PC-9 (cell line): ENCODE measurements at regions of chr19 and their contacts with region 1.

Region 1: DNA sequence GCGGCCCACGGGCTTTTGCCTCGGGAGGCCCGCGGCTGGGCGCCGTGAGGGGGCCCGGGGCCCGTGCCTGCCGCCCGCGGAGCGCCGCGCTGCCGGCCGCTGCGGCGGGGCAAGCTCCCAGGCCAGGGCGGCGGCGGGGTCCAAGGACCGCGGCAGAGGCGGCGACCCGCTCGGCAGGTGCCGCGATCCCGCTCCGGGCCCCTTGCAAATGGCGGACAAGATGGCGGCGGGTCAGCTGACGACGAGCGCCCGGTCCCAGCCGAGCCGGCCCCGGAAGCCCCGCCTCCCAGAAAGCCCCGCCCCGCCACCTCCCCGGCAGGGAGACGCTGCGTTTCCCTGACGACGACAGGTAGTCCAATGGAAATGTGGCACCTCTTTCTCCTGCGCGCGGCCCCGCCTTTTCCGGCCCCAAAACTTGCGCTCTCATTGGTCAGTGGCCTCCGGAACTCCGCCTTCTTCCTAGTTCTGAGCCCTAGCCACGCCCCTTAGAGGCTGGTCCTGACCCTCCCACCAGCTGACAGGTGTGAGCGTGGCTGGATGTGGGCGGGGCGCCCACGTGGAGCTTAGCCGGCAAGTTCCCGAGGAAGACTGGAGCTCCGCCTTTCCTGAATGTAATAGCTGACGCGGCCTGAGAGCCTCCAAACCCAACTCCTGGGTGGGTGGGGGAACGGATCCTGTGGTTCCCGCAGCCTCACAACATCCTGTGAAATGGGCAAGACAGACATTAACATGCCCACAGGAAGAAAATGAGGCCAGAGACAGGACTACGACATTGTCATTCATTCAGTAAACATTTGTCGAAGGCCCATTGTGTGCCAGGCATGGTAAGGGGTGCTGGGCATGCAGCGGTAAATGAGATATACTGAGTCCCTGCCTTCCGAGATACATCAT is at the start of gene AP3D1:
- DNase-seq: peak; percentile 93 to 98
- H3K4me3 ChIP-seq: peak within 1 kb of the TSS; percentile 83
- H3K27ac ChIP-seq: peak within 1 kb of the TSS; percentile 68
- H3K4me1 ChIP-seq: peaks cover 43% of the 10 kb centered on the region
- H3K27me3 ChIP-seq: no peaks in the 10 kb centered on the region
- CTCF ChIP-seq: no peak
- total RNA-seq, gene AP3D1: 75.5 and 87.2 TPM in 2 replicates

Region 2: GRCh38 chr19:1992759-1993260 is 158.8 kb before region 1 on chr19:
- CTCF ChIA-PET with region 1: no interaction called
- POLR2A ChIA-PET with region 1: no interaction called
- intact Hi-C with region 1: no loop called
- DNase-seq: no peak
- H3K4me3 ChIP-seq: no peak overlapping the region
- H3K27ac ChIP-seq: no peak overlapping the region
- H3K4me1 ChIP-seq: no peaks in the 10 kb centered on the region
- H3K27me3 ChIP-seq: no peaks in the 10 kb centered on the region
- CTCF ChIP-seq: no peak

Region 3: DNA sequence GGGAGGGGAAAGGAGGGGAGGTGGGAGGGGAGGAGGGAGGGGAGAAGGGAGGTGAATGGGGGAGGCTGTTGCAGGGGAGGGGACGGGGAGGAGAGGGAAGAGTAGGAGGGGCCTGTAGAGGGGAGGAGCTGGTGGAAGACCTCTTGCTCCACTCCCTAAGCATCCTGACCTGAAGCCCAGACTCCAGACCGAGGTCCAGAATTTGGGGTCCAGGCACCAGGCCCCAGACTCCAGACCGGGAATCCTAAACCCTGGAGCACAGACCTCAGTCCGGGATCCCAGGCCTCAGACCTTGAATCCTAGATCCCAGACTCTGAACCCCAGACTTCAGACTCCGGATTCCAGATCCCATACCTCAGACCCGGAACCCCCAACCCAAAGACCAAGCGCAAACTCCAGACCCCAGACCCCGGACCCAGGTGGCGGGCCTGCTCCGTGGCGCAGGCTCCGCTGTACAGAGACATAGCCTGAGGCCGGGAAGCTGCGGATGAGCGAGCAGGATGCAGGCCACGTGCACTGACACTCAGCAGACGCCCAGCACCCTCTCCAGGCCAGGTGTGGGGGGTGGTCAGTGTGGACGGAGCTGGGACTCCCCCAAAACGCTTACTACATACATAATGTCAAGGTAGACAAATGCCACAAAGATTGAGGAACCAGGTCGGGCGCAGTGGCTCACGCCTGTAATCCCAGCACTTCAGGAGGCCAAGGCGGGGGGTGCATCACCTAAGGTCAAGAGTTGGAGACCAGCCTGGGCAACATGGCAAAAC is 135.4 kb before region 1 on chr19:
- CTCF ChIA-PET with region 1: no interaction called
- POLR2A ChIA-PET with region 1: interaction called, 4 read pairs
- intact Hi-C with region 1: loop called (anchors 10 kb)
- DNase-seq: peak; percentile 44 to 57
- H3K4me3 ChIP-seq: no peak overlapping the region
- H3K27ac ChIP-seq: no peak overlapping the region
- H3K4me1 ChIP-seq: no peaks in the 10 kb centered on the region; the same call in 1 of the 2 replicates
- H3K27me3 ChIP-seq: no peaks in the 10 kb centered on the region
- CTCF ChIP-seq: no peak

Region 4: DNA sequence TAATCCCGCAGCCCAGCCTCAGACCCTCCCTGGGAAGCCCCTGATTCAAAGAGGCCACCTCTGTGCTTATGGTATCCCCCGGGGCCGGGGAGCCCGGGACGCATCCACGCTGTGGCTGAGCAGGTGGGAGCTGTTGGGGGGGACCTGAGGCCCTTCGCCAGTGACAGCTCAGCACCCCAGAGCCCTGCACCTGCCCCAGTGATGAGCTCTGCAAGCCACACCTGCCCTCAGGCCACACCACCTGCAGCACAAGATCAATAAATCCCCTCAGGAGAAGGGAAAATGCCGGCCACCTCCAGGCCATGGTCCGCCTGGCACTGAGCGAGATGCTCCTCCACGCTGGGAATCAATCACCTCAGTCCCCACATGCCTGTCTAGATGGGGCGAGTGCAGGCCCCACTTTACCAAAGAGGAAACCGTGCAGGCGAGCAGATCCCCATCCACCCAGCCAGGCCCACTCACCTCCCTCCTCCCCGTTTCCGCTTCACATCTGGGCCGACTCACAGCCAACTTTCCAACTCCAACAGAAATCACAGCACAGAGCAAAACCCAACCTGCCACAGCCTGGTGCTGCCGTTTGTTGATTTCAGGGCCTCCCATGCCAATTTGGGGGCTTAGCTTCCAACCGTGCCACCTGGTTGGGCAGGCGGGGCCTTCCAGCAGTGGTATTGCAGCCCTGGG is 68.3 kb before region 1 on chr19:
- CTCF ChIA-PET with region 1: no interaction called
- POLR2A ChIA-PET with region 1: no interaction called
- intact Hi-C with region 1: no loop called
- DNase-seq: no peak
- H3K4me3 ChIP-seq: no peak overlapping the region
- H3K27ac ChIP-seq: no peak overlapping the region
- H3K4me1 ChIP-seq: peaks cover 11% of the 10 kb centered on the region
- H3K27me3 ChIP-seq: no peaks in the 10 kb centered on the region
- CTCF ChIP-seq: no peak

Region 5: GRCh38 chr19:2236314-2237050 is 84.9 kb after region 1 on chr19 and contains the starts of genes PLEKHJ1 and SF3A2:
- CTCF ChIA-PET with region 1: interaction called, 4 read pairs
- POLR2A ChIA-PET with region 1: interaction called, 4 read pairs
- intact Hi-C with region 1: loop called (anchors 1 kb)
- DNase-seq: peak; percentile 84 to 95
- H3K4me3 ChIP-seq: peak within 1 kb of the TSS; percentile 82
- H3K27ac ChIP-seq: peak within 1 kb of the TSS; percentile 83
- H3K4me1 ChIP-seq: peaks cover 15% of the 10 kb centered on the region
- H3K27me3 ChIP-seq: no peaks in the 10 kb centered on the region
- CTCF ChIP-seq: peak; percentile 90
- total RNA-seq, gene PLEKHJ1: 38.6 and 45.9 TPM in 2 replicates
- total RNA-seq, gene SF3A2: 73.5 and 83.0 TPM in 2 replicates

Region 6: GRCh38 chr19:2610637-2611482 is 459.3 kb after region 1 on chr19:
- CTCF ChIA-PET with region 1: no interaction called
- POLR2A ChIA-PET with region 1: interaction called, 14 read pairs
- intact Hi-C with region 1: no loop called
- DNase-seq: peak; percentile 60 to 85
- H3K4me3 ChIP-seq: no peak overlapping the region; the same call in 1 of the 2 replicates
- H3K27ac ChIP-seq: no peak overlapping the region
- H3K4me1 ChIP-seq: no peaks in the 10 kb centered on the region
- H3K27me3 ChIP-seq: no peaks in the 10 kb centered on the region
- CTCF ChIP-seq: peak; percentile 86